Spleen (tissue), 13 donors: ENCODE measurements at regions of chr4 and their contacts with region 1.

Region 1: GRCh38 chr4:3442959-3443749 is 1.4 kb downstream of the HGFAC start:
- DNase-seq: peak; percentile 88
- H3K4me3 ChIP-seq: peak overlapping the region in 1 of 8 donors; percentile 12
- H3K27ac ChIP-seq: no peak overlapping the region
- H3K4me1 ChIP-seq: peaks cover 3 to 11% (median 8%) of the 10 kb centered on the region in 6 donors
- H3K27me3 ChIP-seq: peaks cover 0 to 23% (median 0%) of the 10 kb centered on the region in 7 donors
- CTCF ChIP-seq: peak; percentile 92 to 99 (median 99)
- POLR2A ChIP-seq: no peak

Region 2: DNA sequence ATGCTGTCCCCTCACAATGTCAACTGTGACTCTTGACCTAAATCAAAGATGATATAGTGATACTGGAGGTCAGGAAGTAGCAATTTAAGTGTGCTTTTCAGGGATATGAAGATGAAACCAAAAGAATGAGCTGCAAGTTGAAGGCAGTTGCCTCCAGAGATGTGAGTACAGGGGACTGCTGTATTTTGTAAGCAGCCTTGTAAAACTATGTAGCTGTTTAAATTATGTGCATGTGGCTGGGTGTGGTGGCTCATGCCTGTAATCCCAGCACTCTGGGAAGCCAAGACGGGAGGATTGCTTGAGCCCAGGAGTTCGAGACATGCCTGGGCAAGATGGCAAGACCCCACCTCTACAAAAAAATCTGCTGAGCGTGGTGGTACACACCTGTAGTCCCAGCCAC is 671.9 kb before region 1 on chr4:
- intact Hi-C with region 1: no loop called
- DNase-seq: no peak
- H3K4me3 ChIP-seq: no peak overlapping the region
- H3K27ac ChIP-seq: peak overlapping the region in 3 of 8 donors; percentile 45 to 69 (median 61)
- H3K4me1 ChIP-seq: peaks cover 0 to 49% (median 22%) of the 10 kb centered on the region in 6 donors
- H3K27me3 ChIP-seq: no peaks in the 10 kb centered on the region
- CTCF ChIP-seq: no peak
- POLR2A ChIP-seq: no peak

Region 3: DNA sequence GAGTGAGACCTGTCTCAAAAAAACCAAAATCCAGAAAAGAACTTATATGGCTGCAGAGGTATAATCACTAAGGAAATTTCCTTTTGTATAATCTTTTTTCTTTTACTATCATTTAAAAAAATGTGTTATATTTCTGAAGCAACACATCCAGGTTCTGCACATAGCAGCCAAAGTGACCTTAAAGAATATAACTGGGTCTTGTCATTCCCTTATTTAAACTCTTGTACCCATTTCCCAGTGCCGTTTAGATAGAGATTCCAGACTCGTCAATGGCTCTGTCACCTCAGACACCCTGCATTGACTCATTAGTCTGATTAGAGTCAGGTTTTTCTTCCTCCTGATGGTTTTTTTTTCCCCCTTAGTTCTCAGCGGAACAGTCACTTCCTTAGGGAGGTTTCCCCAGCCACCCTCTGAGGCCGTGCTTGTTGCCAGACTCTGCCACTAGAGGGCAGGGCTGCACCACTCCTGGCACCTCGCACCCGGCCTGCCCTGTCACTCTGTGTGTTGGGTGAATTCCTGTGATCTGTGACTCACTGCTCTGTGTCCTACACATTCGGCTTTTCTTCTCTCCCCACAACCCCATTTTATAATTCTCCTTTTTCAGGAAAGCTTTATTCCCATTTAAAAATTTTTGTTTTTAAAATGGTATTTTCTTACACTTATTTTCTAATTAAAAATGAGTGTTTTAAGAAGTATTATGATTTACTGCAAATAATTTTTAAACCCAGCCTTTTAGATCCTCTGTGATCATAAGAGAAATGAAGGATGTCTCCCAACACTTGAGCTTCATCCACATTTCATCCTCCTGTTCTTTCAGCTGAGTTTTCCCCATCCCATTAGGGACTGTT is 336.6 kb before region 1 on chr4:
- intact Hi-C with region 1: loop called (anchors 10 kb)
- DNase-seq: peak; percentile 94
- H3K4me3 ChIP-seq: no peak overlapping the region
- H3K27ac ChIP-seq: peak overlapping the region in 2 of 8 donors; percentile 22 to 42
- H3K4me1 ChIP-seq: peaks cover 4 to 39% (median 14%) of the 10 kb centered on the region in 6 donors
- H3K27me3 ChIP-seq: no peaks in the 10 kb centered on the region
- CTCF ChIP-seq: peak; percentile 89 to 99 (median 96)
- POLR2A ChIP-seq: no peak

Region 4: DNA sequence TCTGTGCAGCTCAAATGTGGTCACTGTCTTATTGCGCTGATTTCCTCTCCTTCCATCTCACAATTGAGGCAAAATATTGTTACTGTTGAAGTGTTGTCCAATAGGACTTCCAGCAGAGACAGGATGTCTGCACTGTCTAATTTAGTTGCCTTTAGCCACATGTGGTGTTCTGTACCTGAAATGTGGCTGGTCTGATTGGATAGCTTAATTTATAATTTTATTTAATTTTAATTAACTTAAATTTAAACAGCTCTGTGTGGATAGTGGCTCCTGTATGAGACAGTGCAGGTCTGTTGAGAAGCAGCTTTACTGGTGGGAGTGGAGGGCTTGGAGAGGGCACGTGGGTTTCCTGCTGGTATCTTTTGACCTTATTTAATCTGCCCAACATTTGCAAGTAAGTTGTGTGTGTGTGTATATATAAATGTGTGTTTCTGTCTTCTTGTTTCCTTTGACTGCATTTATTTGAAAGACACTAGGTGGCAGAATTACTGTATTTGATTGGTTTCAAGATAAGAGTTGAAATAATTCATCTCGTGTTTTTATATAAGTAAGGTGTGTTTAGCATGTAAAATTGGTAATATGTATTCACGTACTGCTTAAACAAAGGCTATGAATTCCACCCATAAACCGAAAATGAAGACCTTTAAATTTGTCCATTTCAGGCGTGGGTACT is 249.5 kb before region 1 on chr4:
- intact Hi-C with region 1: loop called (anchors 5 kb)
- DNase-seq: no peak
- H3K4me3 ChIP-seq: no peak overlapping the region
- H3K27ac ChIP-seq: no peak overlapping the region
- H3K4me1 ChIP-seq: peaks cover 0 to 57% (median 22%) of the 10 kb centered on the region in 6 donors
- H3K27me3 ChIP-seq: no peaks in the 10 kb centered on the region
- CTCF ChIP-seq: peak in 9 of 11 experiments; percentile 23 to 48 (median 34)
- POLR2A ChIP-seq: no peak

Region 5: DNA sequence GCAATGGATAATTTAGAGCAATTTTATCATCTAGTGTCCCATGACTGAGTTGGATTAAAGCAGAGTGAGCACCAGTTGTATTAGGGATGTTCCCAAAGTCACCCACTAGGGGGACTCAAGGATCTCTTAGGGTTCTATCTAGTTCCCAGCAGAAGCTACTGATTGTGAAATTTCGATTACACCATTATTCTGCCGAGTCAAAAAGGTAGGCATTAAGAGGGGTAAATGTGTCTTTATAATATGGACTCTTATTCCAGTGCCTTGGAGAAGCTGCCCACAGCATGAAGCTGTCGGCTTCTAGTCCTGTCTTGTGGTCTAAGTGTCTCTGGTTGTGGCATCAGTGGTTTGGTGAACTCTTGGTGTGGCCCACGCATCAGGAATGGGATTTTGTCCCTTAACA is 97.0 kb before region 1 on chr4:
- intact Hi-C with region 1: loop called (anchors 5 kb)
- DNase-seq: no peak
- H3K4me3 ChIP-seq: no peak overlapping the region
- H3K27ac ChIP-seq: no peak overlapping the region
- H3K4me1 ChIP-seq: peaks cover 0 to 25% (median 17%) of the 10 kb centered on the region in 6 donors
- H3K27me3 ChIP-seq: no peaks in the 10 kb centered on the region
- CTCF ChIP-seq: peak; percentile 68 to 91 (median 83)
- POLR2A ChIP-seq: no peak